T-cell (primary cell): ENCODE measurements at regions of chr2 and their contacts with region 1.

Region 1: DNA sequence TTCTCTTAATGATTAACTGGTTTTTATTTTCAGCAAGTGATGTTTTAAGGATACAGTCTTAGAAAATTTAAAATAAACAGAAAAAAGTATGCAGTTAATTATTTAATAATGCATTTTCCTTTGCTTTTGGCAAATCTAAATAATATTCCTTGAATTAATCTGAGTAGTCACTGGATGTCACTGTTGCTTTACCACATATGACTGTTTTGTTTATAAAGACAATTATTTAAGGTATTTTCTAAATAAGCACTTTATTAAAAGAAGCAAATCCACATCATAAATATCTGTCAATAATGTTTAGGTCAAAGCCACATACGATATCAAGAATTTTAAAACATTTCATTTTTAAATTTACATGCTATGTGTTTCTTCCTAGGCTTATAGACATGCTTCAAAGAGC is 40.6 kb upstream of the TFPI start:
- DNase-seq: no peak
- ATAC-seq: no peak
- H3K4me3 ChIP-seq: no peak overlapping the region
- H3K4me3 Mint-ChIP-seq: no peak overlapping the region
- H3K27ac ChIP-seq: no peak overlapping the region
- H3K27ac Mint-ChIP-seq: no peak overlapping the region
- H3K4me1 ChIP-seq: no peaks in the 10 kb centered on the region
- H3K4me1 Mint-ChIP-seq: no peaks in the 10 kb centered on the region
- H3K27me3 ChIP-seq: no peaks in the 10 kb centered on the region
- H3K27me3 Mint-ChIP-seq: no peaks in the 10 kb centered on the region

Region 2: GRCh38 chr2:187567126-187567525 is 27.7 kb before region 1 on chr2:
- CTCF ChIA-PET with region 1: no interaction called
- POLR2A ChIA-PET with region 1: no interaction called
- DNase-seq: no peak
- ATAC-seq: no peak
- H3K4me3 ChIP-seq: no peak overlapping the region
- H3K4me3 Mint-ChIP-seq: no peak overlapping the region
- H3K27ac ChIP-seq: no peak overlapping the region
- H3K27ac Mint-ChIP-seq: no peak overlapping the region
- H3K4me1 ChIP-seq: no peaks in the 10 kb centered on the region
- H3K4me1 Mint-ChIP-seq: no peaks in the 10 kb centered on the region
- H3K27me3 ChIP-seq: no peaks in the 10 kb centered on the region
- H3K27me3 Mint-ChIP-seq: peaks cover 2 to 3% of the 10 kb centered on the region in 2 donors

Region 3: DNA sequence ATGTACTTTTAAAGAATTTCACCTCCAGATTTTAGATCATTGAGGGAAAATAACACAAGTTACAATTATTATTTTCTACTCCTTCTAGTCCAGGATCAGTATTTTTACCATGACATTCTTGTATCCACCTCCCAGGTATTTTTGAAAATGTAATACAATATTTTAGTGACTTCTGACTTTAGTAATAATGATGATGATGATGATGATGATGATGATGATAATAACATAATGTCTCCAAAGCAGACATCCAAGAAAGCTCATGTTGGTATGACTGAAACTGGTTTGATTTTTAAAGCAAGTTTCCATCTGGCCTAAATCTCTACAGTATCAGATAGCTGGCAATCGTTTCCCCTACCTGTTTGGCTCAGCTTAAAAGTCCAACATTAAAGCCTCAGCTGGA is 556.9 kb after region 1 on chr2:
- CTCF ChIA-PET with region 1: no interaction called
- POLR2A ChIA-PET with region 1: interaction called in 1 of 2 experiments, 16 read pairs
- DNase-seq: no peak
- ATAC-seq: no peak
- H3K4me3 ChIP-seq: no peak overlapping the region
- H3K4me3 Mint-ChIP-seq: no peak overlapping the region
- H3K27ac ChIP-seq: no peak overlapping the region
- H3K27ac Mint-ChIP-seq: no peak overlapping the region
- H3K4me1 ChIP-seq: no peaks in the 10 kb centered on the region
- H3K4me1 Mint-ChIP-seq: no peaks in the 10 kb centered on the region
- H3K27me3 ChIP-seq: no peaks in the 10 kb centered on the region
- H3K27me3 Mint-ChIP-seq: no peaks in the 10 kb centered on the region